CD8-positive, alpha-beta T cell (primary cell): ENCODE measurements at regions of chr17 and their contacts with region 1.

Region 1: DNA sequence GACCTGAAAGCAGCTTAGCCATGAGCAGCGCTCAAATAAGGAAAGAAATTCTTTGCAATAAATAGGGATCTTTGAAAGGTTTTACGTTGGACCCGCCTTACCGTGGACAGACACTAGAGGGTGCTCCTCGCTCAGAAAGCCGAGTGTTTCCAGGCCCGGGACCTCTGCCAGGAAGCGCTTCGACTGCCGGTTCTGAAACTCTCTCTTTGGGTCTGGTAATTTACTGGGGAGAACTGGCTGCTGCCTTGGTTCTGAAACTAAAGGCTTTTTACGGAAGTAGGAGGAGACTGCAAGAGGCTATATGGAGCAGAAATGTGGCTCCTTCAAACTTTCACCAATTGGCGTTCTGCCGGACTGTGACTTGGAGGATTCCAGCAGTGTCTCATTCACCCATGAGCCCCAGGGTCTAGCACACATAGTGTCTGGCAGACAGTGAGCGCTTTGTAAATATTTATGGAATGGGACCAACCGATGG is 45.6 kb upstream of the HOXB9 start:
- DNase-seq: peak; percentile 40 to 81 (median 73)
- ATAC-seq: peak; percentile 93
- H3K4me3 ChIP-seq: no peak overlapping the region
- H3K4me3 Mint-ChIP-seq: peak overlapping the region; percentile 32
- H3K27ac ChIP-seq: no peak overlapping the region
- H3K27ac Mint-ChIP-seq: no peak overlapping the region
- H3K4me1 ChIP-seq: peaks cover 5% of the 10 kb centered on the region
- H3K4me1 Mint-ChIP-seq: peaks cover 4% of the 10 kb centered on the region
- H3K27me3 ChIP-seq: no peaks in the 10 kb centered on the region
- H3K27me3 Mint-ChIP-seq: peaks cover 50% of the 10 kb centered on the region
- CTCF ChIP-seq: peak; percentile 83

Region 2: GRCh38 chr17:48791128-48792032 is 119.6 kb after region 1 on chr17:
- CTCF ChIA-PET with region 1: interaction called, 6 read pairs
- POLR2A ChIA-PET with region 1: no interaction called
- intact Hi-C with region 1: loop called in 1 of 2 experiments (anchors 2 kb)
- DNase-seq: peak in 4 of 9 experiments; percentile 16 to 49 (median 24)
- ATAC-seq: no peak
- H3K4me3 ChIP-seq: no peak overlapping the region
- H3K4me3 Mint-ChIP-seq: no peak overlapping the region
- H3K27ac ChIP-seq: no peak overlapping the region
- H3K27ac Mint-ChIP-seq: no peak overlapping the region
- H3K4me1 ChIP-seq: peaks cover 8% of the 10 kb centered on the region
- H3K4me1 Mint-ChIP-seq: peaks cover 3% of the 10 kb centered on the region
- H3K27me3 ChIP-seq: peaks cover 2 to 3% of the 10 kb centered on the region in 2 experiments
- H3K27me3 Mint-ChIP-seq: peaks cover 43% of the 10 kb centered on the region
- CTCF ChIP-seq: no peak

Region 3: DNA sequence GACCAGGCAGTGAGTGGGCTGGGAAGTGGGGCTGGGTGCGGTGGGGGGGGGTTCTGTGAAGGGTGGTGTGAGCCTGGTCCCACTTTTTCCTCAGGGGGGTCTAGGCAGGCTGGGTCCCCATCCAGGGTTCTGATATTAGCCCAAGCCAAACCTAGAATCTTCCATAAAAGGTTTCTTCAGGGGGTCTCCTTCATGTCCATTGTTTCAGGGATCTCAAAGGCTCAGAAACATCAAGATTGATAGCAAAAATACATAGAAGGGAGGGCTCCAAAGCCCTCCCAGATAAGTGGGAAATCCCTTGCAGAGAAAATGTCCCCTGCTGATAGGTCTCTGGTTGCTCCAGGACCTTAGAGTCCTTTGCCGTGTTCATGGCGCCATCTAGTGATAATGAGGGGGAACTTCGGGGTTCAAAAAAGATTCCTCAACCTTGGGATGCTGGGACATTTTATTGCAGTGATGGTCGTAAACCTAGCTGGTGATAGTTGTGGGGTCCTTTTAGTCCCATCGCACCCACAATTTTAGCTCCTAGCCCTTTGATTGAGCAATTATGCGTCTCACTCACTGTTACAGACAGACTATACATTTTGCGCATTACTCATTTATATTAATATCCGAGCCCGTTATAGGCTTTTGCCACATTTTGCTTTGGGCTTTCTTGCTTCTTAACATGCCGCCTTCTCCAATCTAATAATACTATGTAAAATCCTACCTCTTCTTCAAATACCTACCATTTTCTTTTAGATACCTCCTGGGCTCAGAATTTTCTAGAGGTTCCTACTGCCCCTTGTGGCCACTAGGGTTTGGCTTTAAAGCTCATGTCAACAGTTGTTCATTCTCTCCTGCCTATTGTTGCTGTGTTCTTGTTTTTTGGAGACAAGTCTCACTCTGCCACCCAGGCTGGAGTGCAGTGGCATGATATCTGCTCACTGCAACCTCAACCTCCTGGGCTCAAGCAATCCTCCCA is 360.5 kb after region 1 on chr17:
- CTCF ChIA-PET with region 1: interaction called, 4 read pairs
- POLR2A ChIA-PET with region 1: no interaction called
- intact Hi-C with region 1: loop called (anchors 1 kb)
- DNase-seq: peak in 8 of 9 experiments; percentile 3 to 72 (median 34)
- ATAC-seq: peak; percentile 82
- H3K4me3 ChIP-seq: no peak overlapping the region
- H3K4me3 Mint-ChIP-seq: no peak overlapping the region
- H3K27ac ChIP-seq: no peak overlapping the region
- H3K27ac Mint-ChIP-seq: no peak overlapping the region
- H3K4me1 ChIP-seq: no peaks in the 10 kb centered on the region
- H3K4me1 Mint-ChIP-seq: peaks cover 3% of the 10 kb centered on the region
- H3K27me3 ChIP-seq: peaks cover 0 to 2% of the 10 kb centered on the region in 2 experiments
- H3K27me3 Mint-ChIP-seq: peaks cover 13% of the 10 kb centered on the region
- CTCF ChIP-seq: peak; percentile 84

Region 4: GRCh38 chr17:49290690-49291359 is 619.1 kb after region 1 on chr17:
- CTCF ChIA-PET with region 1: no interaction called
- POLR2A ChIA-PET with region 1: no interaction called
- intact Hi-C with region 1: loop called in 1 of 2 experiments (anchors 5 kb)
- DNase-seq: peak in 3 of 9 experiments; percentile 15 to 43 (median 34)
- ATAC-seq: no peak
- H3K4me3 ChIP-seq: no peak overlapping the region
- H3K4me3 Mint-ChIP-seq: no peak overlapping the region
- H3K27ac ChIP-seq: no peak overlapping the region
- H3K27ac Mint-ChIP-seq: peak overlapping the region; percentile 28
- H3K4me1 ChIP-seq: no peaks in the 10 kb centered on the region
- H3K4me1 Mint-ChIP-seq: no peaks in the 10 kb centered on the region
- H3K27me3 ChIP-seq: no peaks in the 10 kb centered on the region
- H3K27me3 Mint-ChIP-seq: no peaks in the 10 kb centered on the region
- CTCF ChIP-seq: peak; percentile 72